ENCODE measurements at regions of chr13 and their contacts with region 1.

Region 1: GRCh38 chr13:100244431-100244830 is 155.5 kb downstream of the PCCA start:
- DNase-seq: no peak
- ATAC-seq: no peak
- H3K4me3 ChIP-seq: no peak overlapping the region
- H3K27ac ChIP-seq: no peak overlapping the region
- H3K4me1 ChIP-seq: no peaks in the 10 kb centered on the region
- H3K27me3 ChIP-seq: no peaks in the 10 kb centered on the region
- CTCF ChIP-seq: no peak

Region 2: GRCh38 chr13:100130930-100131511 is 113.4 kb before region 1 on chr13:
- CTCF ChIA-PET with region 1: no interaction called
- POLR2A ChIA-PET with region 1: interaction called, 12 read pairs
- intact Hi-C with region 1: no loop called
- DNase-seq: no peak
- ATAC-seq: no peak
- H3K4me3 ChIP-seq: no peak overlapping the region
- H3K27ac ChIP-seq: no peak overlapping the region
- H3K4me1 ChIP-seq: peaks cover 12% of the 10 kb centered on the region
- H3K27me3 ChIP-seq: no peaks in the 10 kb centered on the region
- CTCF ChIP-seq: no peak

Region 3: DNA sequence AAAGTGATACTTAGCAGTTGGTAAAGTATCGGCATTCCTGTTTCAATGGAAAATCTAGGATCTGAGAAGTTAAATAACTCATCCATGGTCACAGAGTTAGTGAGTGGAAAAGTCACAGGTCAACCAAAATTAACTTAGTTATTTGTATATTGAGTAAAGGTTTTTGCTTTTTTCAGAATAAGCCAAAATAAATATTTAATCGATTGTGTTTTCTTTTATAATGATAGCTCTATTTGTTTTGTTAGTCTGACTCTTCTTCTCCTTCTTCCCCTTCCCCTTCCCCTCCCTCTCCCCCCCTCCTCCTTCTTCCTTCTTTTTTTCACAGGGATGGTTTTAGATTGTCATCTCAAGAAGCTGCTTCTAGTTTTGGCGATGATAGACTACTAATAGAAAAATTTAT is 18.0 kb after region 1 on chr13:
- CTCF ChIA-PET with region 1: no interaction called
- POLR2A ChIA-PET with region 1: no interaction called
- intact Hi-C with region 1: no loop called
- DNase-seq: no peak
- ATAC-seq: no peak
- H3K4me3 ChIP-seq: no peak overlapping the region
- H3K27ac ChIP-seq: no peak overlapping the region
- H3K4me1 ChIP-seq: no peaks in the 10 kb centered on the region
- H3K27me3 ChIP-seq: no peaks in the 10 kb centered on the region
- CTCF ChIP-seq: no peak

Region 4: GRCh38 chr13:100356889-100357288 is 112.5 kb after region 1 on chr13:
- CTCF ChIA-PET with region 1: no interaction called
- POLR2A ChIA-PET with region 1: no interaction called
- intact Hi-C with region 1: loop called (anchors 10 kb)
- DNase-seq: no peak
- ATAC-seq: no peak
- H3K4me3 ChIP-seq: no peak overlapping the region
- H3K27ac ChIP-seq: no peak overlapping the region
- H3K4me1 ChIP-seq: no peaks in the 10 kb centered on the region
- H3K27me3 ChIP-seq: no peaks in the 10 kb centered on the region
- CTCF ChIP-seq: no peak